ENCODE measurements at regions of chr19 and their contacts with region 1.

Region 1: GRCh38 chr19:5803752-5804515 is 933 bp upstream of the NRTN start:
- DNase-seq: peak; percentile 77
- ATAC-seq: peak; percentile 97
- H3K4me3 ChIP-seq: peak overlapping the region; percentile 10
- H3K27ac ChIP-seq: no peak overlapping the region; the same call in 1 of the 2 replicates
- H3K4me1 ChIP-seq: peaks cover 3% of the 10 kb centered on the region; the same call in 1 of the 2 replicates
- H3K27me3 ChIP-seq: peaks cover 30% of the 10 kb centered on the region
- CTCF ChIP-seq: peak; percentile 100
- POLR2A ChIP-seq: peak; percentile 50; the same call in 1 of the 2 replicates
- RAD21 ChIP-seq: peak; percentile 96

Region 2: DNA sequence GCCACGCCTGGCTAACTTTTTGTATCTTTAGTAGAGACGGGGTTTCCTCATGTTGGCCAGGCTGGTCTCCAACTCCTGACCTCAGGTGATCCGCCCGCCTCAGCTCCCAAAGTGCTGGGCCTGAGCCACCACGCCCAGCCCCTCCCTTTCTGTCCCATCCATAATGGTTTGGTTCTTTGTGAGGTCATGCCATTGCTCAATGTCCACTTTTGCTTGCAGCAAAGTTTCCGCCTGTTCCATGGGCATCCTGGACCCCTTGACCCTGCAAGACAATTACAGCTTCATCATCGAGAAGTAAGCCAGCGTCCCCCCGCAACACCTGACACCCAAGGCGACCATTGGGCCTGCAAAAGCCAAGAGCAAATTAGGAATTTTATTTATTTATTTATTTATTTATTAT is 36.0 kb before region 1 on chr19:
- CTCF ChIA-PET with region 1: no interaction called
- POLR2A ChIA-PET with region 1: no interaction called
- dilution Hi-C with region 1: no loop called
- in situ Hi-C with region 1: no loop called
- intact Hi-C with region 1: no loop called
- DNase-seq: no peak
- ATAC-seq: no peak
- H3K4me3 ChIP-seq: no peak overlapping the region
- H3K27ac ChIP-seq: no peak overlapping the region
- H3K4me1 ChIP-seq: no peaks in the 10 kb centered on the region
- H3K27me3 ChIP-seq: no peaks in the 10 kb centered on the region
- CTCF ChIP-seq: no peak
- POLR2A ChIP-seq: no peak
- RAD21 ChIP-seq: no peak

Region 3: DNA sequence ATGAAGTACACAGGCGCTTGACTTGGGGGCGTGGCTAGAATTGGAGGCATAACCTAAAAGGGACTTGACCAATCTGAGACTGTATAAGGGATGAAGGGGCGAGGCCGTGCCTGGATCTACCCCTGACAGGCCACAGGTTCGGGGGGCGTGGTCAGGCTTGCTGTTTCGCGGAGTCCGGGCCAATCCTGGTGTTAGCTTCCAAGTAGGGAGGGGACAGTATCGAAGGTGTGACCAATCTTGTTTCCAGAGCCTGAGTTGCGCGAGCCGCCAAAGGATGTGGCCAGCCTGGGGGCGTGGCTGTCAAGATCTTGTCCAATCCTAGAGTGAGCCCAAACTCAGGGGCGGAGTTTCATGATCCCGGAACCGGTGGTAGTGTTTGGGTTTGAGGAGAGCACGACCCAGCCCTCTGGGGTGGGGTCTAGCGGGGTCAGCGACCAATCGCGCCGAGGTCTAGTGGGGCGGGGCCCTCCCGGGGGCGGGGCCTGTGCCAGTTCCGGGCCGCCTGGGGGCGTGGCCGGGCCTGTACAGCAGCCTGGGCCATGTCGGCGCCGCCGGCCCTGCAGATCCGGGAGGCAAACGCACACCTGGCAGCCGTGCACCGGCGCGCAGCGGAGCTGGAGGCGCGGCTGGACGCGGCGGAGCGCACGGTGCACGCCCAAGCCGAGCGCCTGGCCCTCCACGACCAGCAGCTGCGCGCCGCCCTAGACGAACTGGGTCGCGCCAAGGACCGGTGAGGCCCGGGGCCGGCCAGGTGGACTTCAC is 100.6 kb after region 1 on chr19 and contains the start of gene VMAC:
- CTCF ChIA-PET with region 1: interaction called, 18 read pairs
- POLR2A ChIA-PET with region 1: interaction called, 3 read pairs
- dilution Hi-C with region 1: no loop called
- in situ Hi-C with region 1: no loop called
- intact Hi-C with region 1: no loop called
- DNase-seq: peak; percentile 100
- ATAC-seq: peak; percentile 81
- H3K4me3 ChIP-seq: peak within 1 kb of the TSS; percentile 91
- H3K27ac ChIP-seq: peak within 1 kb of the TSS; percentile 70
- H3K4me1 ChIP-seq: peaks cover 4% of the 10 kb centered on the region
- H3K27me3 ChIP-seq: no peaks in the 10 kb centered on the region
- CTCF ChIP-seq: no peak
- POLR2A ChIP-seq: no peak
- RAD21 ChIP-seq: no peak
- total RNA-seq, gene VMAC: 1.4 and 1.7 TPM in 2 replicates

Region 4: DNA sequence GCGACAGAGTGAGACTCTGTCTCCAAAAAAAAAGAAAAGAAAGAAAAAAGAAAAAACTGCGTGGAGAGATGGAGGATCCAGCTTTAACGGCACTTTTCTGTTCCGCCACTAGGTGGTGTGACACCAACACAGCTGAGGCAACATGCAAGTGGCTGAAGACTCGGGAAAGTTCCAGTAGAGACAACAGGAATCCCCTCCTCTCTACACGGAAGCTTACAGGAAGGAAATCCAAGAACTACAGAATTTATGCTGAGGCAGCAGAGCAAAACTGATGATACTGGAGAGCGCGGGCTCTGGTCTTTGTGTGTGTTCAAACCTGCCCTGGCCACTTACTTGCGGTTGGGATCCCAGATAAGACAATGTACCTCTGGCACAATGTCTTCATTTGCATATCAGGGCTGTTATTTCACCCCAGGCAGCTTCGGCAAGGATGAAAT is 164.1 kb after region 1 on chr19:
- CTCF ChIA-PET with region 1: interaction called, 5 read pairs
- POLR2A ChIA-PET with region 1: no interaction called
- dilution Hi-C with region 1: no loop called
- in situ Hi-C with region 1: no loop called
- intact Hi-C with region 1: loop called (anchors 10 kb)
- DNase-seq: peak; percentile 88
- ATAC-seq: peak; percentile 70
- H3K4me3 ChIP-seq: no peak overlapping the region
- H3K27ac ChIP-seq: peak overlapping the region; percentile 99
- H3K4me1 ChIP-seq: peaks cover 41% of the 10 kb centered on the region
- H3K27me3 ChIP-seq: no peaks in the 10 kb centered on the region
- CTCF ChIP-seq: peak; percentile 78
- POLR2A ChIP-seq: no peak
- RAD21 ChIP-seq: peak; percentile 65

Region 5: GRCh38 chr19:6021878-6022569 is 218.1 kb after region 1 on chr19:
- CTCF ChIA-PET with region 1: interaction called, 5 read pairs
- POLR2A ChIA-PET with region 1: no interaction called
- dilution Hi-C with region 1: no loop called
- in situ Hi-C with region 1: loop called (anchors 10 kb)
- intact Hi-C with region 1: loop called (anchors 5 kb)
- DNase-seq: peak; percentile 69
- ATAC-seq: peak; percentile 86
- H3K4me3 ChIP-seq: no peak overlapping the region
- H3K27ac ChIP-seq: no peak overlapping the region
- H3K4me1 ChIP-seq: peaks cover 9% of the 10 kb centered on the region
- H3K27me3 ChIP-seq: no peaks in the 10 kb centered on the region
- CTCF ChIP-seq: peak; percentile 67
- POLR2A ChIP-seq: no peak
- RAD21 ChIP-seq: peak; percentile 69

Measured in IMR-90 (cell line).